Right ventricle myocardium superior (tissue), 1 donor: ENCODE measurements at regions of chr20 and their contacts with region 1.

Region 1: GRCh38 chr20:2451939-2452732 is 18.5 kb downstream of the SNRPB start:
- DNase-seq: peak; percentile 73
- ATAC-seq: peak; percentile 80

Region 2: GRCh38 chr20:1764136-1765033 is 687.8 kb before region 1 on chr20:
- intact Hi-C with region 1: loop called (anchors 10 kb)
- DNase-seq: peak; percentile 87
- ATAC-seq: peak; percentile 96

Region 3: DNA sequence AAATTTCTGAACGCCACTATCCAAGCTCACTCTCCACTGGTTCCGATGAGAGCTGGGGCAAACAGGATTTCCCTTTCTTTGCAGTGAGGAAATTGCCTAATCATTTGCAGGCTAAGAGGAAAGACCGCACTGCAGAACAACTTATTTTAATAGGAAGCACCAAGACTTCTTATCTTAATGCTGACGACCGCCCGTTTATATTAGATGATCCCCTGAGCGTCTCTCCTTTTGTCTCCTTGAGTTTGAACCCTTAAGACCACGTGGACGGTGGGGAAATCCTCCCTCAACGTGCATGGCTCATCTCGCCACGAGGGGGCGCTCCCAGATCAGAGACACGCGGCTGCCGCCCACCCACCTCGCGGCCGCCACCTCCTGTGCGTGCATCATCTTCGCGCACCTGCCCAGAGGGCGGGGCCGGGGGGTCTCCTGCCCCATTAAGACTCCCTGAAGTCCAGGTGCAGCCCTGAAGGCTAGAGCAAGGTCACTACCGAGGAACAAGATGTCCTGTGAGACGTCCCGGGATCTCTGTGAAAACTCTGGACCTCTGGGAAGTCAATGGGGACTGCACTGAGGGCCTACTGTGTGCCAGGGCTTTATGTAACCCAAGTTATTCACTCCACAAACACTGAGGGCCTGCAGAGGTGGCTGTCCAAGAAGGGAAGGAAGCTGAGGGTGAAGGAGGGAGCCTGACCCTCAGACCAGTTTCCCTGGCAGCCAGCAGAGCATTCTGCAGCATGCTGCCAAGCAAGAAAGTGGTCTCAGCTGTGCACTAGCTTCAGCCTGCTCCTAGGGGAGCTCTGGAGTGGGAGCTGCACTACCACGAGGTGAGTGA is 486.4 kb before region 1 on chr20:
- intact Hi-C with region 1: loop called (anchors 5 kb)
- DNase-seq: peak; percentile 87
- ATAC-seq: peak; percentile 91

Region 4: GRCh38 chr20:2206957-2207769 is 245.0 kb before region 1 on chr20:
- intact Hi-C with region 1: loop called (anchors 5 kb)
- DNase-seq: peak; percentile 87
- ATAC-seq: peak; percentile 95

Region 5: GRCh38 chr20:2261105-2261504 is 191.0 kb before region 1 on chr20:
- intact Hi-C with region 1: no loop called
- DNase-seq: no peak
- ATAC-seq: no peak

Region 6: DNA sequence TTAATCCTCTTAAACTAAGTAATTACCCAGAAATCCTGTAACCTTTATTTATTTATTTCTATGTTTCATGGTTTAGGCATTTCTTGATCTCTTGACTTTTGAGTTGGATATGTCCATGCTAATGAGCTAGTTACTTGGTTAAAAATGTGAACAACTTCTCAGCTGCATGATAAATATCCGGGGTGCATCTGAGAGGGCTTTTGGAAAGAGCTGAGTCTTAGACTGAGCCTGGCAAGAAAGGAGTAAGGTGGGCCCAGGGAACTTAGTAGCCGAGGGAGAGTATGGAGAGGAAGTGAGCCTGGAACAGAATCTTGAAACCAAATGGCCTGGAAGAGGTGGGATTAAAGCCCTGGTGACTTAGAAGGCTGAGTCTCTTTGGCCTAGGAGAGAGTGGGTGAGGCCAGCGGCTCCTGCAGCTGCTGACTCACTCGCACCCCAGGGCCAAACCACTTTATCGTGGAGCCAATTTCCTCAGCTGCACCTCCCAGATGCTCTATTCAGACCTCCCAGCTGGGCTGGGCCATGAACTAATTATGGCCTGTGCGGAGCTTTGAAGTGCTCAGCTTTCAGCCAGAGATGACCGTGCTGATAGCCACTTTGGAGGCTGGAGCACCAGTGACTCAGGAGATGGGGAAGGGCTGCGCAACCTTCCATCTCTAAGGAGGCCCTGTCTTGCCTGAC is 137.2 kb before region 1 on chr20:
- intact Hi-C with region 1: no loop called
- DNase-seq: peak; percentile 54
- ATAC-seq: peak; percentile 84